ENCODE measurements at regions of chr1 and their contacts with region 1.

Region 1: DNA sequence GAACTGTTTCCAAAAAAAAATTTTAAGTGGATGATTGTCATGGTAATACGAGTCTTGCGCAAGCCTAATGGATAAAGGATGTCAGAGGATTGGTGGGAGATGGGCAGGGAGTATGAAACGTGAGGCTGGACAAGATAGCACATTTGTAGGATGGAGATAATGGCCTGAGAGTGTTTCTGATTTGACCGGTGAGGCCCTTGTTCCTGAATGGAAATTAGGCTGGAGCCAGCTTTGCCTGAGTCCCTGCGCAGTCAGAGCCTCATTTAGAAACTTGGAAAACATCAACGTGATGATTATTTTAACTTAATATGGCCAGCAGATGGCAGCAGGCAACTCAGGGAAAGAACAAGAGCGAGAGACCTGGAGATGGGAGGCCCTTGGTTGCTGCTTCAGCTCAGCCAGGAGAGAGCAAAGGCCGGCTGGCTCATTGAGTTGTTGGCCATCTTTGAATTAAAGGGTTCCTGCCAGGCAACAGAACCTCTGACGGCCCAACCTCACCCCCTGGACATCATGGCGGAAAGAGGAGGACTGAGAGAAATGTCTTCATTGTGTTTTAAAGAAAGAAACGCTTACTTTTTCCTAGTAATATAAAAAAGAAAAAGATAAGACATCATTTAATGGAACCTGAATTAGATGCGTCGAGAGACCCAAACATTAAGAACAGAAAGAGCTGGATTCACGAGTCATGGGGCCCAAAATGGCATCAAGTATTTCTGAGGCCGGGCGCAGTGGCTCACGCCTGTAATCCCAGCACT is 80.3 kb downstream of the SELENOF start:
- DNase-seq: peak; percentile 17 to 65 (median 44)
- H3K4me3 ChIP-seq: no peak overlapping the region
- H3K4me3 Mint-ChIP-seq: no peak overlapping the region
- H3K27ac ChIP-seq: no peak overlapping the region
- H3K27ac Mint-ChIP-seq: no peak overlapping the region
- H3K4me1 ChIP-seq: no peaks in the 10 kb centered on the region
- H3K4me1 Mint-ChIP-seq: peaks cover 2 to 5% (median 3%) of the 10 kb centered on the region in 3 donors
- H3K27me3 ChIP-seq: no peaks in the 10 kb centered on the region
- H3K27me3 Mint-ChIP-seq: peaks cover 2 to 5% of the 10 kb centered on the region in 2 donors

Region 2: GRCh38 chr1:86965012-86965826 is 131.6 kb after region 1 on chr1:
- CTCF ChIA-PET with region 1: interaction called, 16 read pairs
- POLR2A ChIA-PET with region 1: no interaction called
- DNase-seq: peak in 1 of 5 donors; percentile 23
- H3K4me3 ChIP-seq: no peak overlapping the region
- H3K4me3 Mint-ChIP-seq: no peak overlapping the region
- H3K27ac ChIP-seq: no peak overlapping the region
- H3K27ac Mint-ChIP-seq: peak overlapping the region in 3 of 8 donors; percentile 10 to 81 (median 12)
- H3K4me1 ChIP-seq: no peaks in the 10 kb centered on the region
- H3K4me1 Mint-ChIP-seq: peaks cover 2 to 7% (median 4%) of the 10 kb centered on the region in 3 donors
- H3K27me3 ChIP-seq: no peaks in the 10 kb centered on the region
- H3K27me3 Mint-ChIP-seq: no peaks in the 10 kb centered on the region

Region 3: DNA sequence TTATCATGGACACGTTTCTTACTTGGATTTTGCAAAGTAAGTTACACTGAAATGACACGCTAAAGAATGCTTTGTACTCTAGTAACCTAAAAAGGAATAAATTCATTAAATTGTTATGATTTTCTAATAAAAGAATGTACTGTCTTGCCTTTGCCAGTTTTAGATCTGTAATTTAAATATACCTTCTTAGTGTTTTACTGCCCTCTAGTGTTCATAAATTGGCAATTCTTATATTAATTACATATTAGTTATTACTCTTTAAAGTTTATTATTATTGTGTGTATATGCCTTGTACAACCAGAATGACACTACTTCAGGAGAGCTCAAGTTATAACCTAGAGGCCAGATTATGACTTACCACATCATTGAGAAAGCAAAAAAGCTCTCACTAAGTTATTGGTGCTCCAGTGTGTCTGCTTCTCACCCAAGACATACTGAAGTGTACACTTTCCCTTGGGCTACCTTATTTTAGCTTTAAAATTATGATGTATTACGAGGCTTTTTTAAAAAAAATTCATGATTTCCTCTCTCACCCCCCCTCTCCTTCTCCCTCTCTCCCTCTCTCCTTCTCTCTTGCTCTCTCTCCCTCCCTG is 250.7 kb after region 1 on chr1:
- CTCF ChIA-PET with region 1: interaction called, 66 read pairs
- POLR2A ChIA-PET with region 1: no interaction called
- DNase-seq: peak in 2 of 5 donors; percentile 30 to 42
- H3K4me3 ChIP-seq: no peak overlapping the region
- H3K4me3 Mint-ChIP-seq: no peak overlapping the region
- H3K27ac ChIP-seq: no peak overlapping the region
- H3K27ac Mint-ChIP-seq: no peak overlapping the region
- H3K4me1 ChIP-seq: no peaks in the 10 kb centered on the region
- H3K4me1 Mint-ChIP-seq: peaks cover 2 to 9% (median 7%) of the 10 kb centered on the region in 3 donors
- H3K27me3 ChIP-seq: no peaks in the 10 kb centered on the region
- H3K27me3 Mint-ChIP-seq: no peaks in the 10 kb centered on the region